ENCODE measurements at regions of chr17 and their contacts with region 1.

Region 1: GRCh38 chr17:51764387-51764972 is 394.0 kb downstream of the CA10 start:
- DNase-seq: peak; percentile 61 to 68
- H3K4me3 ChIP-seq: no peak overlapping the region
- H3K27ac ChIP-seq: no peak overlapping the region
- H3K4me1 ChIP-seq: no peaks in the 10 kb centered on the region
- H3K27me3 ChIP-seq: no peaks in the 10 kb centered on the region
- CTCF ChIP-seq: peak; percentile 68 to 96 (median 88)
- EP300 ChIP-seq: no peak
- POLR2A ChIP-seq: no peak
- RAD21 ChIP-seq: peak; percentile 98 to 99

Region 2: GRCh38 chr17:51734462-51734861 is 30.0 kb before region 1 on chr17:
- CTCF ChIA-PET with region 1: interaction called, 11 read pairs
- POLR2A ChIA-PET with region 1: no interaction called
- DNase-seq: peak; percentile 19 to 56
- H3K4me3 ChIP-seq: no peak overlapping the region
- H3K27ac ChIP-seq: no peak overlapping the region
- H3K4me1 ChIP-seq: peaks cover 4 to 8% (median 6%) of the 10 kb centered on the region in 4 experiments; a peak in 6 of 7 replicates
- H3K27me3 ChIP-seq: no peaks in the 10 kb centered on the region
- CTCF ChIP-seq: peak; percentile 61 to 75 (median 68)
- EP300 ChIP-seq: no peak
- POLR2A ChIP-seq: no peak
- RAD21 ChIP-seq: peak; percentile 52 to 66

Region 3: DNA sequence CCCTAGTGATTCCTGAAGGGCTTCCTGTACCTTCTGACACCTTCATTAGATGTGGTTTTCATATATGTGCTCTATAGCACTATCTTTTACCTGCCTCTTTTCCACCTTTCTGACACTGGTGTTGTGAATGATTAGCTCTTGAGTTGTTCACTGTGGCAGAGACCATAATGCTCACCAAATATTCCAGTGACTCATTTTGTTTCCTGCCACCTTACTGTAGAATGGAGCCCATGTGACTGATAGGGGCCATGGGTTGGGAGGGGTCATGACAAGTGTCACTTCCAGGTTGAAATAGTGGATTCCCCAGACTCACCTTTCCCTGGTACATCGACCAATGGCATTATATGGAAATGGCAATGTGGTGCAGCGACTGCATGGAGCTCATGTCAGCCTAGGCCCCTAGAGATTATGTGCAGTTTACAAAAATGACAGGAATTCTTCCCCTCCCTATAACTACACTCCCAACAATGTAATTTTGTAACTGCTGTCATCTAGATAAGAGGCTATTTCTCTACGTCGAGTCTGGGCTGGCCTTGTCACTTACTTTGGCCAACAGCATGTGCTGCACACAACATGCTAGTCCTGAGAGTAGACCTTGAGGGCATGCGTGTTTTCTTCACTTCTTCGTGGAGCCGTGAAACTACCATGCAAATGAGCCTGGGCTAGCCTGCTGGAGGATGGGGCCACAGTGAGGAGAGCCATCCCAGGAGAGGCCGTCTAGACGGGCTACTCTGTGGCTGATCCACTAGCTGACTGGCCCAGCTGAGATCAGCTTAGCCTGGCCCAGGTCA is 15.5 kb before region 1 on chr17:
- CTCF ChIA-PET with region 1: interaction called, 12 read pairs
- POLR2A ChIA-PET with region 1: no interaction called
- DNase-seq: no peak
- H3K4me3 ChIP-seq: no peak overlapping the region
- H3K27ac ChIP-seq: no peak overlapping the region
- H3K4me1 ChIP-seq: peaks cover 0 to 6% (median 5%) of the 10 kb centered on the region in 4 experiments; a peak in 4 of 7 replicates
- H3K27me3 ChIP-seq: no peaks in the 10 kb centered on the region
- CTCF ChIP-seq: no peak
- EP300 ChIP-seq: no peak
- POLR2A ChIP-seq: no peak
- RAD21 ChIP-seq: no peak

Measured in H1 (cell line).